Activated CD4-positive, alpha-beta T cell treated with anti-CD3 and anti-CD28 coated beads, Interleukin-2, amount 10 ng/mL, durations not matched to agents 24 days and 14 days (primary cell): ENCODE measurements at regions of chr13 and their contacts with region 1.

Region 1: GRCh38 chr13:40666045-40666904 is at the start of gene FOXO1:
- DNase-seq: peak; percentile 97
- H3K4me3 Mint-ChIP-seq: peak within 1 kb of the TSS; percentile 93
- H3K27ac Mint-ChIP-seq: peak within 1 kb of the TSS; percentile 95
- H3K4me1 Mint-ChIP-seq: peaks cover 35% of the 10 kb centered on the region
- H3K27me3 Mint-ChIP-seq: no peaks in the 10 kb centered on the region
- total RNA-seq, gene FOXO1: 38.1 and 39.6 TPM in 2 replicates

Region 2: GRCh38 chr13:39777527-39778061 is 888.7 kb before region 1 on chr13:
- intact Hi-C with region 1: loop called (anchors 2 kb)
- DNase-seq: peak; percentile 72
- H3K4me3 Mint-ChIP-seq: peak overlapping the region; percentile 47
- H3K27ac Mint-ChIP-seq: peak overlapping the region; percentile 92
- H3K4me1 Mint-ChIP-seq: peaks cover 36% of the 10 kb centered on the region
- H3K27me3 Mint-ChIP-seq: no peaks in the 10 kb centered on the region

Region 3: GRCh38 chr13:40190641-40191100 is 475.6 kb before region 1 on chr13:
- intact Hi-C with region 1: loop called (anchors 5 kb)
- DNase-seq: peak; percentile 90
- H3K4me3 Mint-ChIP-seq: peak overlapping the region; percentile 83
- H3K27ac Mint-ChIP-seq: peak overlapping the region; percentile 92
- H3K4me1 Mint-ChIP-seq: peaks cover 64% of the 10 kb centered on the region
- H3K27me3 Mint-ChIP-seq: no peaks in the 10 kb centered on the region

Region 4: GRCh38 chr13:40318366-40318765 is 347.9 kb before region 1 on chr13:
- intact Hi-C with region 1: loop called (anchors 5 kb)
- DNase-seq: no peak
- H3K4me3 Mint-ChIP-seq: no peak overlapping the region
- H3K27ac Mint-ChIP-seq: peak overlapping the region; percentile 47
- H3K4me1 Mint-ChIP-seq: peaks cover 58% of the 10 kb centered on the region
- H3K27me3 Mint-ChIP-seq: no peaks in the 10 kb centered on the region

Region 5: DNA sequence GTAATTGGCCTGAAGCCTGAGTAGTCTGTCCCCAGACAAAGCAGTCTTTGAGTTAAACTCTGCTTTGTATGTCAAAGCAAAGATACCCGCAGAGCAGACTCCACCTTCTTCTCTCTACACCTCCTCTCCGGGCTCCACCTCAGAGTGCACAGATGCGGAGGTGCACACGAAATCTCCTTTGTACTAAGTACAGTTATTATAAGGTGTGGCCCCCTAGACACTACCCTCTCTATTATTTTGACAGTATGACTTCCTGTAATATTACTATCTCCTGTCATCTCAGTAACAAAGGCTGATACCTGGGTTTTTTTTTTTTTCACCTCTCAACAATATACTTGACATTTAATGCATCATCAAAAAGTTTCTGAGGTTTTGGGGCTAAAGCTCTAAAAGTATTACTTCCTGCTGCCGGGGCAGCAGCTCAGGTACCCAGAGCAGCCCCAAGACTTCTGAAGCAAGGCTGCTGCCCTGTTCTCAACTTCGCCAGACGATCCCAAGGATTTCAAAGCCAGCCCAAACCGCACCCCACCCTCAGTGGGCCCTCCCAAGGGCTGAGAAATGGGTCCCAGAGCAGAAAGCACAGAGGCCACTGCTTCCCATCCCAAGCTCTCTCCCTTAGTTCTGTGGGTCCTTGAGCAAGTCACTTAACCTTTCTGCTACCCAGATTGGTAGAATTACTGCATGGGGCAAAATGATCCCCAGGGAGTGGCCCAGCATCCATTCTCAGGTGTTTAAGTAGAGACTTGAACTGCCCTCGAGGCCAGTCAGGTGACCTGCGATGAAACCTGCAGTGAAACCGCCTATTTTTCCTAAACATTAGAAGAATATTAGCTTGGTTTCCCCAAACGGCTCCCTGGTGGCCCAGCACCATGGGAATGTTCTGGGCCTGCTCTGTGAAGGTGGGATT is 180.4 kb before region 1 on chr13:
- intact Hi-C with region 1: loop called (anchors 2 kb)
- DNase-seq: peak; percentile 87
- H3K4me3 Mint-ChIP-seq: peak overlapping the region; percentile 69
- H3K27ac Mint-ChIP-seq: peak overlapping the region; percentile 90
- H3K4me1 Mint-ChIP-seq: peaks cover 55% of the 10 kb centered on the region
- H3K27me3 Mint-ChIP-seq: no peaks in the 10 kb centered on the region

Region 6: DNA sequence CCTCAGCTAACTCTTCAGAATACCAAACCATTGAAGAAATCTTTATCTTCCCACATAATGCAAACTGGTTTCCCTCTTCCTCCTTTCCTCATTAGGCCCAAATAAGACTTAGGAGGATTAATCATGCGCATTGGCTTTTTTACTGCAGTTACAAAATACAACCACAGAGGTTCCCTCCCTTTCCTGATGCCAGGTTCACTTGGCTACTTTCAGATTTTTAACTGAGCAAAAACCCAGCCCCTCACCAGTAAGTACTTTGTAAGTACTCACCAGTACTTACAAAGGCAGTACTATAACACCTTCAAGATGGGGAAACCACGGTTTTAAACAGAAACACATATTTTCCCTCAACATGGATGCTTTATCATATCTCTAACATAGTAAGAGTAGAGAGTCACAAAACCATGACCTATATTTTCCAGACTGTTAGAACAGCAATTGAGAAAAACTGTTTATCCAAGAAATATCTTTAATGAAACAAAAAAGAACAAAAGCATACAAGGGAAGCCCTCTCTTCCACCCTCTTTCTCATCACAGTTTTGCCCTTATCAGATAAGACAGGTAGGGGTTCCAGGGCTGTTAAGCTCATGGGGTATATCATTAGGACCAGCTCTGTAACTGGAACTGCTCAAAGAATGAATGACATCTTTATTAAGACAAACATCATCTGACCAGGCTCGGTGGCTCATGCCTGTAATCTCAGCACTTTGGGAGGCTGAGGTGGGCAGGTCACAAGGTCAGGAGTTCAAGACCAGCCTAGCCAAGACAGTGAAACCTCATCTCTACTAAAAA is 12.6 kb before region 1 on chr13:
- intact Hi-C with region 1: loop called (anchors 1 kb)
- DNase-seq: no peak
- H3K4me3 Mint-ChIP-seq: peak overlapping the region; percentile 78
- H3K27ac Mint-ChIP-seq: peak overlapping the region; percentile 94
- H3K4me1 Mint-ChIP-seq: peaks cover 65% of the 10 kb centered on the region
- H3K27me3 Mint-ChIP-seq: no peaks in the 10 kb centered on the region

Region 7: GRCh38 chr13:40764587-40765403 is 98.5 kb after region 1 on chr13:
- intact Hi-C with region 1: no loop called
- DNase-seq: peak; percentile 69
- H3K4me3 Mint-ChIP-seq: peak overlapping the region; percentile 59
- H3K27ac Mint-ChIP-seq: peak overlapping the region; percentile 96
- H3K4me1 Mint-ChIP-seq: peaks cover 42% of the 10 kb centered on the region
- H3K27me3 Mint-ChIP-seq: no peaks in the 10 kb centered on the region

Region 8: GRCh38 chr13:41061075-41061913 is 395.0 kb after region 1 on chr13 and contains the start of gene WBP4:
- intact Hi-C with region 1: loop called (anchors 2 kb)
- DNase-seq: peak; percentile 96
- H3K4me3 Mint-ChIP-seq: peak within 1 kb of the TSS; percentile 100
- H3K27ac Mint-ChIP-seq: peak within 1 kb of the TSS; percentile 100
- H3K4me1 Mint-ChIP-seq: peaks cover 46% of the 10 kb centered on the region
- H3K27me3 Mint-ChIP-seq: peaks cover 5% of the 10 kb centered on the region
- total RNA-seq, gene WBP4: 13.3 and 14.1 TPM in 2 replicates